ENCODE measurements at regions of chr17 and their contacts with region 1.

Region 1: GRCh38 chr17:68101075-68101992 is 65.8 kb downstream of the KPNA2 start:
- DNase-seq: peak; percentile 90 to 96
- H3K4me3 ChIP-seq: peak overlapping the region; percentile 83 to 94
- H3K27ac ChIP-seq: peak overlapping the region; percentile 83 to 88
- H3K4me1 ChIP-seq: peaks cover 0 to 12% of the 10 kb centered on the region in 2 donors
- H3K27me3 ChIP-seq: no peaks in the 10 kb centered on the region
- CTCF ChIP-seq: no peak

Region 2: GRCh38 chr17:67717624-67718329 is 383.6 kb before region 1 on chr17 and contains the start of gene NOL11:
- intact Hi-C with region 1: loop called (anchors 5 kb)
- DNase-seq: peak; percentile 95 to 100
- H3K4me3 ChIP-seq: peak within 1 kb of the TSS; percentile 91 to 97
- H3K27ac ChIP-seq: peak within 1 kb of the TSS; percentile 89 to 92
- H3K4me1 ChIP-seq: peaks cover 5 to 11% of the 10 kb centered on the region in 2 donors
- H3K27me3 ChIP-seq: no peaks in the 10 kb centered on the region
- CTCF ChIP-seq: peak; percentile 85 to 92 (median 87)
- total RNA-seq, gene NOL11: 22.0 TPM

Region 3: GRCh38 chr17:67959288-67959900 is 141.9 kb before region 1 on chr17:
- intact Hi-C with region 1: loop called (anchors 10 kb)
- DNase-seq: no peak
- H3K4me3 ChIP-seq: no peak overlapping the region
- H3K27ac ChIP-seq: no peak overlapping the region
- H3K4me1 ChIP-seq: no peaks in the 10 kb centered on the region
- H3K27me3 ChIP-seq: no peaks in the 10 kb centered on the region
- CTCF ChIP-seq: no peak

Region 4: GRCh38 chr17:67993596-67994361 is 107.6 kb before region 1 on chr17:
- intact Hi-C with region 1: loop called (anchors 1 kb)
- DNase-seq: no peak
- H3K4me3 ChIP-seq: peak overlapping the region; percentile 73 to 91
- H3K27ac ChIP-seq: peak overlapping the region; percentile 91 to 97
- H3K4me1 ChIP-seq: peaks cover 4 to 9% of the 10 kb centered on the region in 2 donors
- H3K27me3 ChIP-seq: no peaks in the 10 kb centered on the region
- CTCF ChIP-seq: no peak

Region 5: GRCh38 chr17:68035523-68036303 is 65.6 kb before region 1 on chr17 and contains the start of gene KPNA2:
- intact Hi-C with region 1: loop called (anchors 1 kb)
- DNase-seq: peak; percentile 78 to 95
- H3K4me3 ChIP-seq: peak within 1 kb of the TSS; percentile 90 to 97
- H3K27ac ChIP-seq: peak within 1 kb of the TSS; percentile 64 to 76
- H3K4me1 ChIP-seq: peaks cover 0 to 7% of the 10 kb centered on the region in 2 donors
- H3K27me3 ChIP-seq: no peaks in the 10 kb centered on the region
- CTCF ChIP-seq: no peak
- total RNA-seq, gene KPNA2: 11.6 TPM

Region 6: DNA sequence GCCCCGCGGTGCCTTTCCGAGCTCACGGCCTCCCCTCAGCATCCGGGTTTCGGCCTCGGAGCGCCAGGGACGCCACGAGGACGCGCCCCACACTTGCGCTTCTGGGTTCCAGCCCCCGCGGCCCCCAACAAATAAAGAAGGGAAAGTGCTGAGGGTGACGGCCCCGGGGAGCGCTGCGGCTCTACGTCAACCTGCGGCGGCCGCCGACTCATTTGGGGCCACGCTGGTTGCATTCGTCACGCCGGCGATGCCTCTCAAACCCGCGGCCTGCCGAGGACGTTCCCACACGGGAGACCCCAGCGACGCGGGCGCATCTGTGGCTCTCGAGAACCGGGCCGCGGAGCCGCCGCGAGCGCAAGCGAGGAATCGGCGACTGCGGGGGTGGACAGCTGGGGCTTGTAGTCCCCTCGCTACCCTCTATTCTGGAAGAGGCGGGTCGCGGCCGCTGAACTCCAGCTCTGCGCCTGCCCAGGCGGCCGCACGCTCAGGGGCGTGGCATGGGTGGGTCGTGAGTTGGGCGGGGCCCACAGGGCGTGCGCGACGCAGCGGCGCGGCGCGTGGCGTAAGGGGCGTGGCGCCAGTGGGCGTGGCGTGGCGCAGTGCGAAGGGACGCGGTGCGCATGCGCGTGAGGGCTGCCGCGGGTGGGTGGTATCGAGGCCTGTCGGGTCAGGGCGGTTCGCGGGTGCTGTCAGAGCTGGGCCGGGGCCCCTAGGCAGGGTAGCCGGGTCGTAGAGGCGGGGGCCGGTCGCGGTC is 146.3 kb after region 1 on chr17 and contains the start of gene AMZ2:
- intact Hi-C with region 1: loop called (anchors 2 kb)
- DNase-seq: peak; percentile 72 to 95
- H3K4me3 ChIP-seq: peak within 1 kb of the TSS; percentile 83 to 90
- H3K27ac ChIP-seq: peak within 1 kb of the TSS; percentile 96 to 97
- H3K4me1 ChIP-seq: peaks cover 0 to 14% of the 10 kb centered on the region in 2 donors
- H3K27me3 ChIP-seq: no peaks in the 10 kb centered on the region
- CTCF ChIP-seq: no peak
- total RNA-seq, gene AMZ2: 41.6 TPM

Region 7: DNA sequence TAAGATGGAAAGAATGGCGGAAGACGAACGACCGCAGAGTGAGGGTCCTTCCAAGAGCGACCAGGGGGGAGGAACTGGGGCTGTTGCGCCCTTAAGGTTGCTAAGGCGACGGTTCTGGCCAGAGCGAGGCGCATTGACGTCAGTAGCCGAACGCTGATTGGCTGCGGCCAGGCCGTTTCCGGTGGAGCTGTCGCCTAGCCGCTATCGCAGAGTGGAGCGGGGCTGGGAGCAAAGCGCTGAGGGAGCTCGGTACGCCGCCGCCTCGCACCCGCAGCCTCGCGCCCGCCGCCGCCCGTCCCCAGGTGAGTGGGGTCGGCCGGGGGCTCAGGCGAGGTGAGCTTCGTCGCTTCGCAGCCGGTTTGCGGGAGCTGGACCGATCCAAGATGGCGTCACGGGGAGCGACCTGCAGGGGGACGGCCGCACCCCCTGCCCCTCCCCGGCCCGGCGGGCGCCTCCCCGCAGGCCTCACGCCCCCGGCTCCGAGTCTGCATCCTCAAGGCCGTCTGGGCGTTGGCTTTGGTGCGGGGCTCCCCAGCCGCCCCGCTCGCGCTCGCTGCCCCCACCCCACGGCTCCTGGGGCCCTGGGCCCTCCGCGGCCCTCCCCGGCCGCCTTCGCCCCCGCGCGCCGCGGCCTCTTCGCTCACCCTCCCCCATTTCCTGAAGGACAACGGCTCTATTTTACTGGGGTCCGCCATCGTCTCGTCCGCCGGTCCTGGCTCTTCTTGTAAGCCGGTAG is 411.1 kb after region 1 on chr17 and contains the start of gene PRKAR1A:
- intact Hi-C with region 1: loop called (anchors 5 kb)
- DNase-seq: peak; percentile 78 to 96
- H3K4me3 ChIP-seq: peak within 1 kb of the TSS; percentile 88 to 100
- H3K27ac ChIP-seq: peak within 1 kb of the TSS; percentile 96
- H3K4me1 ChIP-seq: peaks cover 0 to 25% of the 10 kb centered on the region in 2 donors
- H3K27me3 ChIP-seq: no peaks in the 10 kb centered on the region
- CTCF ChIP-seq: peak in 1 of 3 experiments; percentile 11
- total RNA-seq, gene PRKAR1A: 233 TPM